ENCODE measurements at regions of chr13 and their contacts with region 1.

Region 1: GRCh38 chr13:91162180-91162579 is 185.3 kb upstream of the MIR17HG start:
- DNase-seq: no peak

Region 2: DNA sequence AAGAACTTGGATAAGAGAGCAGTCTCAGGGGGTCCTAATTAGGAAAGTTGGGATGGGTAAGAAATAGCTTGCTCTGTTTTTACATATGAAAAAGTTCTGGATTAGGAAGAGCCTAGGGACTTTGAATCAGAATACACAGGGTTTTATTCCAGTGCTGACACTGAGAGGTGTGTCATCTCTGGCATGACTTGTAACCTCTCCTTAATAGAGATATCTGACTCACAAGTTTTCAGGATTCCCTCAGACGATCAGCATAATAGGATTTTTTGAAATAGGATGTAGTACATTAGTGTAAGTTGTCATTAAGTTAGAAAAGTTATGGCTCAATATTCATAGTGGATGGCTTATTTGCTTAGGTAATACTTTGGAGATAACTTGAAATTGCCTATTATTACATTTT is 369.8 kb before region 1 on chr13:
- CTCF ChIA-PET with region 1: no interaction called
- POLR2A ChIA-PET with region 1: no interaction called
- DNase-seq: no peak

Region 3: GRCh38 chr13:91133941-91134802 is 28.0 kb before region 1 on chr13:
- CTCF ChIA-PET with region 1: interaction called, 15 read pairs
- POLR2A ChIA-PET with region 1: no interaction called
- DNase-seq: peak; percentile 84